Activated CD4-positive, alpha-beta T cell treated with anti-CD3 and anti-CD28 coated beads, Interleukin-2, amount 10 ng/mL, durations not matched to agents 24 days and 14 days (primary cell): ENCODE measurements at regions of chr15 and their contacts with region 1.

Region 1: DNA sequence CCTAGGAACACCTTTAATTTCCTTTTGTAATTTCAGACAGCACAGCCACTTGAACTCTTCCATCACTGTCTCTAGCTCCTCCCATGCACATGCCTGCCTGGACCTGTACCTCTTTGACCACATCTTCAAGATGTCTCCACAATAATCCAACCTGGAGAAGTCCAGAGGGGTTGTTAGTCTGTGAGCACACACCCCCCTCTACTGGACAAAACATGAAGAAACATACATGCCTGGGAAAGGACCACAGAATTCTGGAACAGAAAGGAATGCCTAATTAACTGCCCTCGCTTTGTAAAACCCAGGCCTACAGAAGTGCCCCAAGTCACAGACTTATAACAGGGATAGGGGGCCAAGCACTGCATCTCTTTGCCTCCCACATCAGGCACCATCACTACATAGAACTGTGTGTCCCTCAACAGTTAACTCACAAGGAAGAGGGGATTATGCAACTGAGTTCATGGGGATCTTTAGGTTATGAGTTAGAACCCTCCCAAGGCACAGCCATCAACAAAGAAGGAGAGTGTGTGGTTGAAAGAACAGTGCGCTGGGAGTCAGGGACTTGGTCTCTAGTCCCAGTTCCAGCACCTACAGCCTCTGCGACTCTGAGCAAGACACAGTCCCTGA is 61.7 kb downstream of the FMN1 start:
- DNase-seq: no peak
- H3K4me3 Mint-ChIP-seq: no peak overlapping the region
- H3K27ac Mint-ChIP-seq: no peak overlapping the region
- H3K4me1 Mint-ChIP-seq: no peaks in the 10 kb centered on the region
- H3K27me3 Mint-ChIP-seq: no peaks in the 10 kb centered on the region

Region 2: GRCh38 chr15:33086507-33087121 is 46.2 kb before region 1 on chr15:
- intact Hi-C with region 1: loop called (anchors 1 kb)
- DNase-seq: peak; percentile 58
- H3K4me3 Mint-ChIP-seq: no peak overlapping the region
- H3K27ac Mint-ChIP-seq: no peak overlapping the region
- H3K4me1 Mint-ChIP-seq: no peaks in the 10 kb centered on the region
- H3K27me3 Mint-ChIP-seq: peaks cover 2% of the 10 kb centered on the region